PC-9 (cell line): ENCODE measurements at regions of chr2 and their contacts with region 1.

Region 1: GRCh38 chr2:103161456-103162289 is 399.8 kb downstream of the TMEM182 start:
- DNase-seq: peak in 1 of 2 experiments; percentile 7
- H3K4me3 ChIP-seq: no peak overlapping the region
- H3K27ac ChIP-seq: no peak overlapping the region
- H3K4me1 ChIP-seq: no peaks in the 10 kb centered on the region
- H3K27me3 ChIP-seq: peaks cover 64% of the 10 kb centered on the region
- CTCF ChIP-seq: peak; percentile 86

Region 2: DNA sequence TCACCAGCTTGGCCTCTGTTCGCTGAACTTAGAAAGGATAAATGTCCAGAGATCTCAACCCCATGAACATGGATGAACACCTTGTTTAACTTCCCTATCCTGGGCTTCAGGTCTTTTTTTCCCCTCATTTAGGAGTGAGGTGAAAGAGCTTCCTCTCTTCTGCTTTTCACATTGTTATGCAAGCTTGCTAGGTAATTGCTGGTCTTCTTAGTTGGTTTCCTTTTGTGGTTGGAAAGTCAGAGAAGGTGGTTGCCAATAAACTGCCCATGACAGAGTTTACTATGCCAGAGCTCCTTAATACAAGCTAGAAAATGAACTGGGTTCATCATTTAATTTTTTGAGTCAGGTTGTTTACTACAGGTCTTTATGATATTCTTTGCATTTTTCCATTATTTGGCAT is 672.0 kb before region 1 on chr2:
- CTCF ChIA-PET with region 1: no interaction called
- POLR2A ChIA-PET with region 1: no interaction called
- intact Hi-C with region 1: no loop called
- DNase-seq: no peak
- H3K4me3 ChIP-seq: no peak overlapping the region
- H3K27ac ChIP-seq: peak overlapping the region; percentile 9; the same call in 1 of the 2 replicates
- H3K4me1 ChIP-seq: peaks cover 38% of the 10 kb centered on the region
- H3K27me3 ChIP-seq: no peaks in the 10 kb centered on the region
- CTCF ChIP-seq: no peak

Region 3: DNA sequence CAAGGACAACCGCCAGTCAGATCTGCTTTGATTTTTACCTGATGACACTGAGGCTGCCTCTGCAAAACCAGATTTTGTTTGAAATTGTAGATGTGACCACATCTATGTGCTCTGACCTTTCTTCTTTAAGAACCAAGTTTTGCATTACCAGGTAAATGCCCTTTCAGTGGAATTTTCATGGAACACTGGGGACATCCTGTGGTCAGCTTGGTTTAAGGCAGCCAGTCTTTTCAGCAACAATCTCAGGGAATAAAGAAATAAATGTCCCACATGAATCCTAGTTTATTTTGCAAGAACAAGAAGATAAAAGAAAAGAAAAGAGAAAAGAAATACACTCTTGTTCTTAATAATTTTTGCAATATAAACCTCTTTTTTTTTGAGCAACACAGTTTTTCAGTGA is 1782.8 kb after region 1 on chr2:
- CTCF ChIA-PET with region 1: no interaction called
- POLR2A ChIA-PET with region 1: no interaction called
- intact Hi-C with region 1: loop called (anchors 10 kb)
- DNase-seq: peak in 1 of 2 experiments; percentile 3
- H3K4me3 ChIP-seq: no peak overlapping the region
- H3K27ac ChIP-seq: no peak overlapping the region
- H3K4me1 ChIP-seq: no peaks in the 10 kb centered on the region
- H3K27me3 ChIP-seq: peaks cover 80% of the 10 kb centered on the region
- CTCF ChIP-seq: peak; percentile 60